Activated CD4-positive, alpha-beta T cell treated with anti-CD3 and anti-CD28 coated beads for 36 hours (primary cell): ENCODE measurements at regions of chr12 and their contacts with region 1.

Region 1: GRCh38 chr12:113467502-113468364 is 3.9 kb downstream of the LHX5 start:
- DNase-seq: no peak
- ATAC-seq: no peak
- H3K4me3 Mint-ChIP-seq: no peak overlapping the region
- H3K27ac Mint-ChIP-seq: no peak overlapping the region
- H3K4me1 Mint-ChIP-seq: peaks cover 18% of the 10 kb centered on the region
- H3K27me3 Mint-ChIP-seq: peaks cover 64% of the 10 kb centered on the region

Region 2: GRCh38 chr12:114684098-114684869 is 1216.6 kb after region 1 on chr12 and contains the start of gene TBX3:
- CTCF ChIA-PET with region 1: no interaction called
- POLR2A ChIA-PET with region 1: no interaction called
- intact Hi-C with region 1: loop called (anchors 5 to 10 kb)
- DNase-seq: peak; percentile 86
- ATAC-seq: peak; percentile 94
- H3K4me3 Mint-ChIP-seq: peak within 1 kb of the TSS; percentile 71
- H3K27ac Mint-ChIP-seq: peak within 1 kb of the TSS; percentile 33
- H3K4me1 Mint-ChIP-seq: peaks cover 38% of the 10 kb centered on the region
- H3K27me3 Mint-ChIP-seq: peaks cover 90% of the 10 kb centered on the region
- total RNA-seq, gene TBX3: not detected

Region 3: GRCh38 chr12:114697741-114698565 is 1230.2 kb after region 1 on chr12:
- CTCF ChIA-PET with region 1: no interaction called
- POLR2A ChIA-PET with region 1: no interaction called
- intact Hi-C with region 1: loop called in 1 of 2 experiments (anchors 5 kb)
- DNase-seq: no peak
- ATAC-seq: no peak
- H3K4me3 Mint-ChIP-seq: no peak overlapping the region
- H3K27ac Mint-ChIP-seq: no peak overlapping the region
- H3K4me1 Mint-ChIP-seq: no peaks in the 10 kb centered on the region
- H3K27me3 Mint-ChIP-seq: peaks cover 88% of the 10 kb centered on the region